ENCODE measurements at regions of chr15 and their contacts with region 1.

Region 1: GRCh38 chr15:69475769-69476358 is 23.2 kb downstream of the RPLP1 start:
- DNase-seq: peak; percentile 66 to 82 (median 69)
- ATAC-seq: peak; percentile 49 to 86 (median 75)
- H3K4me3 ChIP-seq: no peak overlapping the region
- H3K27ac ChIP-seq: no peak overlapping the region
- H3K4me1 ChIP-seq: no peaks in the 10 kb centered on the region
- H3K27me3 ChIP-seq: no peaks in the 10 kb centered on the region
- CTCF ChIP-seq: peak; percentile 84 to 95 (median 90)
- POLR2A ChIP-seq: no peak

Region 2: GRCh38 chr15:69576035-69576526 is 100.2 kb after region 1 on chr15:
- intact Hi-C with region 1: loop called in 1 of 10 experiments (anchors 5 kb)
- DNase-seq: peak; percentile 48 to 83 (median 54)
- ATAC-seq: peak; percentile 70 to 89 (median 88)
- H3K4me3 ChIP-seq: no peak overlapping the region
- H3K27ac ChIP-seq: no peak overlapping the region
- H3K4me1 ChIP-seq: peaks cover 0 to 24% (median 0%) of the 10 kb centered on the region in 12 donors
- H3K27me3 ChIP-seq: peaks cover 0 to 19% (median 0%) of the 10 kb centered on the region in 9 donors
- CTCF ChIP-seq: peak; percentile 46 to 79 (median 66)
- POLR2A ChIP-seq: no peak

Region 3: DNA sequence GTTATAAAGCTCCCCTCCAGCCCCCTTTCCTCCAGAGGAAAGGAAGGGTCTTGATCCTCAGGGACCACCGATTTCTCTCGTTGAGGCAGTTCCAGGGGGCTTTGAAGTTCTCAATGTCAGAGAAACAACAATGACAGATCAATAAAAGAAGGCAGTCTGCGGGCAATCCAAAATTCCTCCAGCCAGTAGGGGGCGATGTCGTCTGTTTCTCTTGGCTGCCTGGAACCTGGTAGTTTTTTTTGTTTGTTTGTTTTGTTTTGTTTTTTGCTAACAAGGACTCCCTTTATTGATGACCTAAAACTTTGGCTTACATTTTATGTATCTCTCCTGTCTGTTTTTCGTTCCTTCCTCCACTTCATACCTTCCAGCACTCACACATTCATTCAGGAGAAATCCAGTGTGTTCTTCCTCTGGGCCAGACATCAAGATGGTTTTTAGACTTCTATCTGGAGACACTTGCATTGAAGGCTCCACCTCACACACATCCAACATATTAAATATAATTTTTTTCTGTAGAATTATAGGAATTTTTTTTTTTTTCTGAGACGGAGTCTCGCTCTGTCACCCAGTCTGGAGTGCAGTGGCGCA is 253.4 kb after region 1 on chr15:
- intact Hi-C with region 1: loop called in 2 of 10 experiments (anchors 5 to 10 kb)
- DNase-seq: peak in 2 of 5 donors; percentile 17 to 36
- ATAC-seq: no peak
- H3K4me3 ChIP-seq: no peak overlapping the region
- H3K27ac ChIP-seq: no peak overlapping the region
- H3K4me1 ChIP-seq: peaks cover 0 to 34% (median 0%) of the 10 kb centered on the region in 12 donors
- H3K27me3 ChIP-seq: peaks cover 0 to 19% (median 3%) of the 10 kb centered on the region in 9 donors
- CTCF ChIP-seq: peak; percentile 53 to 81 (median 72)
- POLR2A ChIP-seq: no peak

Region 4: DNA sequence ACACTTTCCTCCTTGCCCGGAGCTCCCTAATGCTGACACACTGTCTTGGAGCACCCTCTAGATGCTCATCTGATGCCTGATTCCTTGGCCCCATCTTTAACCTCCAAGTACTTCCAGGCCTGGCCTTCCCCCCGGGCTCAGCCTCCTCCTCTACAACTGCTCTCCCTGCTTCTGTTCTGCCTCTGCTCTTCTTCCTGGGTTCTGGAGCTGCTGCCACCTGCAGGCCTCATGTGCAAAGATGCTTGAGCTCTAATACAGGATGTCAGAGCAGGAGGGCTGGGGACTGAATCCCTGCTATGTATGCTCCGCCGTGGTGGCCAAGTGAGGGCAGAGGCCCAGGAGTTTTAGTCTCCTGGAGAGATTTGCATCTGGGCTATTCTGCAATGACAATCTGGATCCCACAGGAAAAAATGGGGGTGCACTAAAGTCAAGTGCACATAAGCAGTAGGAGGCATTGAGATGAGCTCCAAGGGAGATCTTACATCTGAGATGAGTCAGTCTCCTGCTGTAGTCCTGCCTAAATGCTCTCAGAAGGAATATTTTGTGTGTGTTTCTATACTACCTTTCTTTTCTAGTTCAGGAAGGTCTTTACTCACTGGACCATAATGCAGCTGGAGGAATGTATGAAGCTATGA is 991.1 kb after region 1 on chr15:
- intact Hi-C with region 1: loop called in 5 of 10 experiments (anchors 5 kb)
- DNase-seq: peak in 4 of 5 donors; percentile 33 to 68 (median 41)
- ATAC-seq: peak; percentile 62 to 84 (median 74)
- H3K4me3 ChIP-seq: no peak overlapping the region
- H3K27ac ChIP-seq: no peak overlapping the region
- H3K4me1 ChIP-seq: peaks cover 0 to 15% (median 0%) of the 10 kb centered on the region in 12 donors
- H3K27me3 ChIP-seq: peaks cover 0 to 23% (median 2%) of the 10 kb centered on the region in 9 donors
- CTCF ChIP-seq: peak; percentile 39 to 71 (median 50)
- POLR2A ChIP-seq: no peak

Region 5: GRCh38 chr15:70806992-70807712 is 1331.3 kb after region 1 on chr15:
- intact Hi-C with region 1: loop called in 2 of 10 experiments (anchors 5 to 10 kb)
- DNase-seq: peak; percentile 58 to 80 (median 67)
- ATAC-seq: peak; percentile 7 to 73 (median 46)
- H3K4me3 ChIP-seq: no peak overlapping the region
- H3K27ac ChIP-seq: peak overlapping the region in 8 of 12 donors; percentile 7 to 72 (median 48)
- H3K4me1 ChIP-seq: peaks cover 0 to 45% (median 10%) of the 10 kb centered on the region in 12 donors
- H3K27me3 ChIP-seq: no peaks in the 10 kb centered on the region
- CTCF ChIP-seq: no peak
- POLR2A ChIP-seq: no peak

Measured in heart left ventricle (tissue), 16 donors.